Colonic mucosa (tissue), 4 donors: ENCODE measurements at regions of chr2 and their contacts with region 1.

Region 1: DNA sequence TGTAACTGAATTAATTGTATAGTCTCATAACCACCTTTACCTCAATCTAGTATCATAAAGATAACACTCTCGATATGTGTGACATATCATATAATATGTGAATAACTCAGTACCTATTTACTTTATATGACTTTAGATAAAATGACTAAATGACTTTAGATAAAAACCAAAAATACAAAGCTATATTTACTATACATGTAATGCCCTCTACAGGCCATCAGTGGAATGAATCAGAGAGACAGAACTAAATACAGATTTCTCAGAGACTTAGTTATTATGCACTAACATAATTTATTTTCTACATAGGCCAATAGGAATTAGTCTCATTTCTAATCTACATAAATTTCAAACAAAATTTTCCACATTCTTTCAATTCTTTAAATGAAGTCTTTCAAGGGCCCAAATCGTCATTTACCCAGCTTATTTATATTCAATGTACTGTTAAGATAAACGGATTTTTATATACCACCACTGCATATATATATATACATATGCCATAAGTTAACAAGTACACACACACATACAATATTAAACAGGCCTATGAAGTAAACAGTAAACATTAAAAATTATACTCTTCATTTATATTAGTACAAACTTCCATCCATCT is 219.9 kb downstream of the EXOC6B start:
- DNase-seq: no peak
- H3K4me3 ChIP-seq: no peak overlapping the region
- H3K27ac ChIP-seq: no peak overlapping the region
- H3K4me1 ChIP-seq: no peaks in the 10 kb centered on the region
- H3K27me3 ChIP-seq: no peaks in the 10 kb centered on the region
- CTCF ChIP-seq: peak; percentile 66

Region 2: GRCh38 chr2:72745679-72746368 is 139.9 kb after region 1 on chr2:
- intact Hi-C with region 1: loop called (anchors 10 kb)
- DNase-seq: no peak
- H3K4me3 ChIP-seq: no peak overlapping the region
- H3K27ac ChIP-seq: no peak overlapping the region
- H3K4me1 ChIP-seq: no peaks in the 10 kb centered on the region
- H3K27me3 ChIP-seq: no peaks in the 10 kb centered on the region
- CTCF ChIP-seq: peak; percentile 62